CD4-positive, alpha-beta T cell (primary cell): ENCODE measurements at regions of chr12 and their contacts with region 1.

Region 1: GRCh38 chr12:21501379-21501956 is at the starts of genes GOLT1B and RECQL:
- DNase-seq: peak; percentile 75 to 97 (median 82)
- ATAC-seq: peak; percentile 93
- H3K4me3 ChIP-seq: peak within 1 kb of the TSS; percentile 88
- H3K4me3 Mint-ChIP-seq: no peak within 1 kb of the TSS
- H3K27ac ChIP-seq: peak within 1 kb of the TSS; percentile 58 to 79
- H3K27ac Mint-ChIP-seq: no peak within 1 kb of the TSS
- H3K4me1 ChIP-seq: peaks cover 25% of the 10 kb centered on the region
- H3K4me1 Mint-ChIP-seq: peaks cover 52% of the 10 kb centered on the region
- H3K27me3 ChIP-seq: no peaks in the 10 kb centered on the region
- H3K27me3 Mint-ChIP-seq: no peaks in the 10 kb centered on the region
- CTCF ChIP-seq: no peak
- total RNA-seq, gene GOLT1B: 41.5 to 46.3 TPM
- total RNA-seq, gene RECQL: 11.1 to 16.0 TPM

Region 2: DNA sequence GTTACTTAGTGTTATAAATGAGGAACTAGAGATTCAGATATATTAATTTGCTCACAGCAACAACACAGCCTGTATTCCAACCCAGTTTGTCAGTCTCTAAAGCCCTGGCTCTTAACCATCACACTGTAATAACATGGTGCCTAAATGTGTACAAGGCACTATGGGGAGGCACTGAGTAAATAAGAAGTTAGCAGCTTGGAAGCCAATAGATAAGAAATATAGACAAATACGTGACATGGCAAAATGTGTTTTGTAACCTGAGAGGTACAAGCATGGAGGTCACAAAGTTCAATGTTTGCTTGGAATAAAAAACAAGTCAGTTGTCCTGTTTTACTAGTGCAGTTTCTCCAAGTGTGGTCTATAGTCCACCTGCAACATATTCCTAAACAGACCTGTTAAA is 150.5 kb before region 1 on chr12:
- CTCF ChIA-PET with region 1: no interaction called
- POLR2A ChIA-PET with region 1: no interaction called
- intact Hi-C with region 1: no loop called
- DNase-seq: no peak
- ATAC-seq: no peak
- H3K4me3 ChIP-seq: no peak overlapping the region
- H3K4me3 Mint-ChIP-seq: no peak overlapping the region
- H3K27ac ChIP-seq: no peak overlapping the region
- H3K27ac Mint-ChIP-seq: no peak overlapping the region
- H3K4me1 ChIP-seq: no peaks in the 10 kb centered on the region
- H3K4me1 Mint-ChIP-seq: no peaks in the 10 kb centered on the region
- H3K27me3 ChIP-seq: no peaks in the 10 kb centered on the region
- H3K27me3 Mint-ChIP-seq: peaks cover 39% of the 10 kb centered on the region
- CTCF ChIP-seq: no peak

Region 3: DNA sequence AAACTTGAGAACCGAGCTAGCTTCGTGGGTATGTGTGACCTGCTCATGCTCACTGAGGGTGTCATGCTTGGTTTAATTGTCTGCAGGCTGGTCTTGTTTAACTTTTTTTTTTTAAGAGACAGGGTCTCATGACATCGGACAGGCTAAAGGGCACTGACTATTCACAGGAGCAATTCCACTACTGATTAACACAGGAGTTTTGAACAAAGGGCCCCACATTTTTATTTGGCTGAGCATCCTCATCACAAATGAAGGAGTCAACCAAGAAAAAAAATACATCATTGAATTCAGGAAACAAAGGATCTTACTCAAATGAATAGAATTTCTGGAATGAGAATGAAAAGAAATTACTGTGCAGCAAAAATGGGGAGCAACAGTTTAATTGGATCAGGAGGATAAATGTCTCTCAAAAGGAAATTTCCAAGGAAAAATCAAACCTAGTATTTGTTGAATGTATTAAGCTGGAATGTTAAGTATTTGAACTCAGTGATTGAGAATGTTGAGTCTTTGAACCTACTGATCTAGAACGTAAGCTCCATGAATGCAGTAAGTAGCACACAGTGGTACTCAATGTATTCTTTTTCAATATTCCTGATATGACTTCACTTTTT is 84.9 kb before region 1 on chr12:
- CTCF ChIA-PET with region 1: no interaction called
- POLR2A ChIA-PET with region 1: no interaction called
- intact Hi-C with region 1: no loop called
- DNase-seq: no peak
- ATAC-seq: no peak
- H3K4me3 ChIP-seq: no peak overlapping the region
- H3K4me3 Mint-ChIP-seq: no peak overlapping the region
- H3K27ac ChIP-seq: no peak overlapping the region
- H3K27ac Mint-ChIP-seq: no peak overlapping the region
- H3K4me1 ChIP-seq: no peaks in the 10 kb centered on the region
- H3K4me1 Mint-ChIP-seq: no peaks in the 10 kb centered on the region
- H3K27me3 ChIP-seq: no peaks in the 10 kb centered on the region
- H3K27me3 Mint-ChIP-seq: peaks cover 32% of the 10 kb centered on the region
- CTCF ChIP-seq: no peak

Region 4: DNA sequence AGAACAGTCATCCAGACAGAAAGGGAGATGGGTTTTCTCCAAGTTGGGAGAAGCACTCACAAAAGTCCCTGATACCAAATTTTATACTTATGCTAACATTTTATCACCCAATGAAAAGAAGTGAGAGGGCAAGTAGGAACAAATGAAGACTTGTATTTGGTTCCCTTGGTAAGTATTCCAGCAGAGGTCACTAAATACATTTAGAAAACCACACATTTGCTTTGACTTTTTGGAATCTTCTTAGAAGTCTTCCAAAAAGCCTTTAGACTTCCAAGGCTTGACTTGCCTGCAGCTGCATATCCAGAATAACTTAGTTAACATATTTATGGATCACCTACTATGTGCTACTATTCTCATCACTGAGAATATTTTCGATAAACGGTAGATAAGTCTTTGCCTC is 106.2 kb after region 1 on chr12:
- CTCF ChIA-PET with region 1: no interaction called
- POLR2A ChIA-PET with region 1: interaction called, 3 read pairs
- intact Hi-C with region 1: loop called in 1 of 2 experiments (anchors 5 kb)
- DNase-seq: peak in 3 of 14 experiments; percentile 54 to 60 (median 59)
- ATAC-seq: peak; percentile 58
- H3K4me3 ChIP-seq: no peak overlapping the region
- H3K4me3 Mint-ChIP-seq: no peak overlapping the region
- H3K27ac ChIP-seq: no peak overlapping the region
- H3K27ac Mint-ChIP-seq: no peak overlapping the region
- H3K4me1 ChIP-seq: peaks cover 3% of the 10 kb centered on the region
- H3K4me1 Mint-ChIP-seq: peaks cover 7% of the 10 kb centered on the region
- H3K27me3 ChIP-seq: no peaks in the 10 kb centered on the region
- H3K27me3 Mint-ChIP-seq: no peaks in the 10 kb centered on the region
- CTCF ChIP-seq: peak; percentile 76

Region 5: GRCh38 chr12:21683115-21683514 is 181.6 kb after region 1 on chr12:
- CTCF ChIA-PET with region 1: interaction called, 6 read pairs
- POLR2A ChIA-PET with region 1: interaction called, 14 read pairs
- intact Hi-C with region 1: loop called (anchors 1 to 10 kb)
- DNase-seq: no peak
- ATAC-seq: no peak
- H3K4me3 ChIP-seq: no peak overlapping the region
- H3K4me3 Mint-ChIP-seq: no peak overlapping the region
- H3K27ac ChIP-seq: no peak overlapping the region
- H3K27ac Mint-ChIP-seq: no peak overlapping the region
- H3K4me1 ChIP-seq: peaks cover 4% of the 10 kb centered on the region
- H3K4me1 Mint-ChIP-seq: peaks cover 25% of the 10 kb centered on the region
- H3K27me3 ChIP-seq: no peaks in the 10 kb centered on the region
- H3K27me3 Mint-ChIP-seq: no peaks in the 10 kb centered on the region
- CTCF ChIP-seq: no peak

Region 6: DNA sequence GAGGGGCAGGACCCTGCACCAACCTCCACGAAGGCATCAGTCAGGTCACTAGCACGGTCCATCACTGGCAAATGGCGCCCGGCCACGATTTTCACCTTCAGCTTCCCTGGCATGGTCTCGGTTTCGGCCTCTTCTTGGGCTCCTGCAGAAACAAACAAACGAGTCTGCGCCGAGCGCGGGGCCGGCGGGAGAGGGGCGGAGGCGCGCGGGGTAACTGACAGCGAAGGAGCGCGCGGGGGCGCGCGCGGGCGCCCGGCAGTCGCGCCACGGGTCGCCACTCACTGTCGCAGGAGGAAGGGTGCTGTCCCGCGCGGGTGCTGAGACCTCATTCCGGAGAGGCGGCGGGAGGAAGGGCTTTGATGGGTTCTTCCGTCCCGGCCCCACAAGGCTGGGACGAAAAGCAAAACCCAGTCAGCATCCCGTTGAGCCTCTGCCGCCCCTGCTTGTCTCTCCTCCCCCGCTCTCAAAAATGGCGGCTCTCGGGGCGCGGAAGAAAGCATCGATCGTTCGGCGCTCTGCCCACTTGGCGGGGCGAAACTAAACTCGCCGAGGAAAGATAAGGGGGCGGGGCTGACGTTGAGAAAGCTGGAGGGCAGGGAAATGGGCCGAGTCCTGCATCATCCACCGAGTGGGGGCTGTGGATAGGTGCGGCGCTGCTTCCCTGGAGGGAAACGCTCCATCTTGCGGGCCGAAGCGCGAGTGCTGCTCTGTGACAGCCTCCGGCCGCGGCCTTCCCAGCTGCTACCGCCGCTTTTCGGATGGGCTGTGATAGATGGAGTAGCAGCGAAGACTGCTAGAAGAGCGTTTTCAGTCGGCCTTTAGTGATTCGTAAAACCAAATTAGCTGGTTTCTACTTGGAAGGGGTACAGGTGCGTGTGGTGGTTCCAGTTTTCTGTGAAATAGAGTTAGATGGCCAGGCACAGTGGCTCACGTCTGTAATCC is 1042.8 kb after region 1 on chr12 and contains the start of gene C2CD5:
- CTCF ChIA-PET with region 1: no interaction called
- POLR2A ChIA-PET with region 1: interaction called, 6 read pairs
- intact Hi-C with region 1: loop called in 1 of 2 experiments (anchors 10 kb)
- DNase-seq: peak; percentile 90 to 98 (median 94)
- ATAC-seq: peak; percentile 89
- H3K4me3 ChIP-seq: peak within 1 kb of the TSS; percentile 82
- H3K4me3 Mint-ChIP-seq: peak within 1 kb of the TSS; percentile 95
- H3K27ac ChIP-seq: peak within 1 kb of the TSS; percentile 81 to 88
- H3K27ac Mint-ChIP-seq: peak within 1 kb of the TSS; percentile 97
- H3K4me1 ChIP-seq: peaks cover 31% of the 10 kb centered on the region
- H3K4me1 Mint-ChIP-seq: peaks cover 44% of the 10 kb centered on the region
- H3K27me3 ChIP-seq: no peaks in the 10 kb centered on the region
- H3K27me3 Mint-ChIP-seq: peaks cover 6% of the 10 kb centered on the region
- CTCF ChIP-seq: peak; percentile 37
- total RNA-seq, gene C2CD5: 21.8 to 23.2 TPM